CD4-positive, alpha-beta memory T cell (primary cell): ENCODE measurements at regions of chr17 and their contacts with region 1.

Region 1: DNA sequence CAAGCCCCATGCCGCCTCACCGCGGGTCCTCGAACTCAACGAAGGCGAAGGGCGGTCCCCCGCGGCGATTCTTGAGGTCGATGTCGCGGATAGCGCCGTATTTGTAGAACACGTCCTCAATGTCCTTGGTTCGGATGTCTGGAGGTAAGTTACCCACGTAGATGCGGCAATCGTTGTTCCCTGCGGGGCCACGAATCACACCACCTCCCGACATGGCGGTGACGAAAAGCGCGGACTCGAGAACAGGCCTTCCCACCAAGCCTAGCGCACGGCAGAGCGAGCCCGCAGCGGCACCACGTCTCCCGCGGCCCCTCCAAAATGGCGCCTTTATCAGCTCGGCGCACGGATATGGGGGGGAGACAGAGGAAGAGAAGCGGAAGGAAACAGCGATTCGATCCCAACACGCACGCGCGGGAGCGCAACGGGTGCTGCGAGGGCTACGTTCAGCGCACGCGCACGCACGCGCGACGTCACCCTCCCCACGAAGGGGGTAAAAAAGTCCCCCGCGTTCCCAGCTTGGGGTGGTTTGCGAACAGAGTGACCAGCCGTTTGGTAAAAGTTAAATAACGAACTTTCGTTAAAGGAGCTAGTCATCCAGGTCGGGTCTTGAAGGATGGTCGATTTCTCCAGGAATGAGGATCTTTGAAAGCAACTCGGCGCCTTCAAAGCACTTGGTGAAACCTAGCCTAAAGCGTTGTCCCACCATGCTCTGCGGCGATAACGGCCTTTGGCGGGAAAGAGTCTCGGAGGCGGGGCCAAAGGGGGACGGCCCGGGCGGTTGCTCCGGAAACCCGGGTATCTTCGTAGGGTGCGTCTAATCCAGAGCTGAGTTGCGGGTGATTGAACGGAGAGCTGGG is at the start of gene SRSF1:
- DNase-seq: peak; percentile 98 to 99 (median 99)
- H3K4me3 ChIP-seq: peak within 1 kb of the TSS; percentile 96 to 98
- H3K4me3 Mint-ChIP-seq: peak within 1 kb of the TSS; percentile 96 to 100 (median 100)
- H3K27ac ChIP-seq: peak within 1 kb of the TSS; percentile 97
- H3K27ac Mint-ChIP-seq: peak within 1 kb of the TSS; percentile 98 to 100 (median 99)
- H3K4me1 ChIP-seq: peaks cover 46% of the 10 kb centered on the region
- H3K4me1 Mint-ChIP-seq: peaks cover 30 to 61% (median 44%) of the 10 kb centered on the region in 4 donors
- H3K27me3 ChIP-seq: no peaks in the 10 kb centered on the region
- H3K27me3 Mint-ChIP-seq: no peaks in the 10 kb centered on the region
- total RNA-seq, gene SRSF1: 242 to 257 TPM

Region 2: DNA sequence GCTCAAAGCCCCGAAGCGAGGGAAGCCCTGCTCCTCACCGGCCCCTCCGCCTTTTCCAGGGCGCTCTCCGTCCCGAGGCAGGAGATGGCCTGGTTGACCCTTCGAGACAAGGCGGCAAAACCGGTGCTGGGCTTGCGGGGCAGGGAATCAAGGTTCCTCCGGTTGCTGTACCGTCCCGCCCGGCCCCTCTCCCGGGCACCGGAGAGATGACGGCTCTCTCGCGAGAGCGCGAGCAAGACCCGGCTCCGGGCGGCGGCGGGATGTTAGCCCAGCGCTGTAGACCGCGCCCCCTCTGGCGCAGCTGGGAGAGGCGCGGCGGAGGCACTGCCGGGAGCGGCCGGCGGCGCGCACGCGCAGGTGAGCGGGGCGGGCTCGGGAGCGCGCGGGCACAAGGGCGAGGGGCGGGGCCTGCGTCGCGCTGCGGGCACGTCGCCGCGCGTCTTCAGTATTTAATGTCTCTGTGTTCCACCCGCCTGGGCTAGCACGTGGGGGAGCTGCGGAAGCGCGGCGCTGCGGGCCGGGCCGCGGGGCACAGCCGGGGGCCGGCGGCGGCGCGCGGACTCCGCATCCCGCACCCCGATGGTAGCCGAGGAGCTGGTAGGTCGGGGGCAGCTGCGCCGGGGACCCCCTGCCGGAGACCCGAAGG is 922.2 kb before region 1 on chr17 and contains the start of gene AKAP1:
- CTCF ChIA-PET with region 1: no interaction called
- POLR2A ChIA-PET with region 1: interaction called, 5 read pairs
- intact Hi-C with region 1: loop called (anchors 10 kb)
- DNase-seq: peak; percentile 93 to 98 (median 98)
- H3K4me3 ChIP-seq: peak within 1 kb of the TSS; percentile 72 to 99
- H3K4me3 Mint-ChIP-seq: peak within 1 kb of the TSS; percentile 91 to 95 (median 92)
- H3K27ac ChIP-seq: peak within 1 kb of the TSS; percentile 83
- H3K27ac Mint-ChIP-seq: peak within 1 kb of the TSS; percentile 93 to 98 (median 95)
- H3K4me1 ChIP-seq: peaks cover 18% of the 10 kb centered on the region
- H3K4me1 Mint-ChIP-seq: peaks cover 22 to 35% (median 27%) of the 10 kb centered on the region in 4 donors
- H3K27me3 ChIP-seq: no peaks in the 10 kb centered on the region
- H3K27me3 Mint-ChIP-seq: no peaks in the 10 kb centered on the region
- total RNA-seq, gene AKAP1: 33.0 to 35.7 TPM

Region 3: DNA sequence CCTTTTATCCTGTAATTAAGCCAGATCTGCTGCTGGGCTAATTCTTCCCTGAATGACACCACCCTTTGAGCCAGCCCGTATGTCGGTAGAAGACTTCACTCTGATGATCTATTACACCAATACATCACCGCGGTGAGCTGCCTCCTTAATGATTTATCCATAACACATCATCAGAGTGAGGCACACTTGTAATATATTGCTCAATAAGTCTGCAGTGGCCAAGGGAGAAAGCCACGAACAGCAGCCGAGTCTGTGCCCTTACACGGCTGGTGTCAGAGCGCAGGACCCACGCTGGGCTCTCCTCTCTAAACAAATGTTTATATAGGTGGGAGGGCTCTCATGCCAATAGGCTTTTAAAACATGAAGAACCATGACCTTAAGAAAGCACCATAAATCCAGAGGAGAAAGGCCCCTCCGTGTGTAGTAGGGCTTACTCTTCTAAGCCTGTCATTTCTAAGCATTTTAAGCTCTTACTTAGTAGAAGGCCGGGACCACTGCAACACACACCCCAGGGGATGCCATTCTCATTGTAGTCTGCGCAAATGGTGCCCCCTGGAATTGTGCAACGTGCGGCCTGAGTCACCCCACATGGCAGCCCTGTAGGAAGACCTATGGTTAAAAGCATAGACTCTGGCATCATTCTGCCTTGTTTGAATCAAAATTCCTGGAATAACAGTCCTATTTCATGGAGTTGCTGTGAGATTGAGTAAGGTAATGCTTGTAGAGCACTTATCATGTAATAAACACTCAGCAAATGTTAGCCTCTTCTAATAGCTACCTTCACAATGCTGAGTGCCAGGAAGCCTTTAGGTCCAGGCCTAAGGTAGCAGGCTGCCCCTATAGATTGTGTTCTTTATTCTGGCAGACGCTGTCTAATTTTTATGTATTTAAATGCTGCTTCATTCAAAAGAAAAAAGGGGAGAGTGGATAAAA is 183.4 kb before region 1 on chr17:
- CTCF ChIA-PET with region 1: no interaction called
- POLR2A ChIA-PET with region 1: no interaction called
- intact Hi-C with region 1: no loop called
- DNase-seq: no peak
- H3K4me3 ChIP-seq: no peak overlapping the region
- H3K4me3 Mint-ChIP-seq: no peak overlapping the region
- H3K27ac ChIP-seq: no peak overlapping the region
- H3K27ac Mint-ChIP-seq: no peak overlapping the region
- H3K4me1 ChIP-seq: no peaks in the 10 kb centered on the region
- H3K4me1 Mint-ChIP-seq: no peaks in the 10 kb centered on the region
- H3K27me3 ChIP-seq: no peaks in the 10 kb centered on the region
- H3K27me3 Mint-ChIP-seq: peaks cover 3 to 5% of the 10 kb centered on the region in 2 donors

Region 4: DNA sequence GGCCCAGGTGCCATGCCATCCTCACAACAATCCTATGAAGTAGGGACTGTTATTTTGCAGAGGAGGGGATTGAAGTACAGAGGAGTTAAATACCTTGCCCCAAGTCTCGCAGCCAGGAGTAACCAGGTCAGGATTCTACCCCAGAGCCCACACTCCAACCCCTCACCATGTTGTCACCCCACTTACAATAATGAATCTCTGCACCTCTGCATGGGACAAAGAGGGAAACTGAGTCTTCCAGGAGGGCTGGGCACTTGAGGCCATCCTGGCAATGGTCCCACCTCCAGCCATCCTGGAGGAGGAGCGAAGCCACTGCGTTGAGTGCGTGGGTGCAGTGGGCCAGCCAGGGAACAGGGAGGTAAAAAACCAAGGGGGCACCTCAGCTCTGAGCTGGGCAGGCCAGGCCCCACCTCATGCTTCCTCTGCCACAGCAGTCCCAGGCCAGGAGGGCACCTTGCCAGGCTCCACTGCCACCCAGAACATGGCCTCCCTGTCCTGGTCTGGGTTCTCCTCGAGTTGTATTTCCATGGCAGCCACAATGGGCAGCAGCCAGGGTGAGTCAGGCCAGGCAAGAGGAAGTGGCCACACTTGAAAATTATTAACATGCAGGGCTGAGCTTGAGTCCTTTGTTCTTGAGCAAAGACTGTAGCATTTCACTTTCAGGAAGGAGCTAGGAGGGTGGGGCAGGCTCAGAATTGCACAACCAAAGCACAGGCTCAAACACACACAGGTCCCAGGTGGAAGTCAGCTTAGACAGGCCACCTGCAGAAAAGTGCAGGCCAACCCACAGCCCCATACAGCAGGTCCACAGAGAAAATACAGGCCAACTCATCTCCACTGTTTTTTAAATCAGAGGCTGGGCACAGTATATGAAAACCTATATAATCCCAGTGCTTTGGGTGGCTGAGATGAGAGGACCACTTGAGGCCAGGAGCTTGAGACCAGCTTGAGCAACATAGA is 104.1 kb before region 1 on chr17:
- CTCF ChIA-PET with region 1: no interaction called
- POLR2A ChIA-PET with region 1: no interaction called
- intact Hi-C with region 1: no loop called
- DNase-seq: no peak
- H3K4me3 ChIP-seq: no peak overlapping the region
- H3K4me3 Mint-ChIP-seq: peak overlapping the region in 1 of 8 donors; percentile 28
- H3K27ac ChIP-seq: no peak overlapping the region
- H3K27ac Mint-ChIP-seq: peak overlapping the region in 2 of 7 donors; percentile 57 to 66
- H3K4me1 ChIP-seq: peaks cover 14% of the 10 kb centered on the region
- H3K4me1 Mint-ChIP-seq: peaks cover 7 to 27% (median 16%) of the 10 kb centered on the region in 4 donors
- H3K27me3 ChIP-seq: no peaks in the 10 kb centered on the region
- H3K27me3 Mint-ChIP-seq: peaks cover 0 to 2% of the 10 kb centered on the region in 2 donors

Region 5: GRCh38 chr17:57987580-57988421 is 19.4 kb before region 1 on chr17 and contains the start of gene VEZF1:
- CTCF ChIA-PET with region 1: interaction called, 70 read pairs
- POLR2A ChIA-PET with region 1: interaction called, 85 read pairs
- intact Hi-C with region 1: loop called (anchors 1 kb)
- DNase-seq: peak; percentile 75 to 84 (median 80)
- H3K4me3 ChIP-seq: peak within 1 kb of the TSS; percentile 62 to 89
- H3K4me3 Mint-ChIP-seq: peak within 1 kb of the TSS; percentile 94 to 97 (median 96)
- H3K27ac ChIP-seq: peak within 1 kb of the TSS; percentile 76
- H3K27ac Mint-ChIP-seq: peak within 1 kb of the TSS; percentile 94 to 98 (median 97)
- H3K4me1 ChIP-seq: peaks cover 55% of the 10 kb centered on the region
- H3K4me1 Mint-ChIP-seq: peaks cover 46 to 69% (median 61%) of the 10 kb centered on the region in 4 donors
- H3K27me3 ChIP-seq: no peaks in the 10 kb centered on the region
- H3K27me3 Mint-ChIP-seq: no peaks in the 10 kb centered on the region
- total RNA-seq, gene VEZF1: 76.0 to 76.6 TPM

Region 6: GRCh38 chr17:58156839-58157803 is 150.0 kb after region 1 on chr17:
- CTCF ChIA-PET with region 1: no interaction called
- POLR2A ChIA-PET with region 1: interaction called, 6 read pairs
- intact Hi-C with region 1: loop called (anchors 10 kb)
- DNase-seq: peak; percentile 54 to 67 (median 58)
- H3K4me3 ChIP-seq: peak overlapping the region; percentile 55 to 63
- H3K4me3 Mint-ChIP-seq: peak overlapping the region; percentile 87 to 98 (median 92)
- H3K27ac ChIP-seq: peak overlapping the region; percentile 68
- H3K27ac Mint-ChIP-seq: peak overlapping the region; percentile 90 to 99 (median 97)
- H3K4me1 ChIP-seq: peaks cover 63% of the 10 kb centered on the region
- H3K4me1 Mint-ChIP-seq: peaks cover 49 to 82% (median 68%) of the 10 kb centered on the region in 4 donors
- H3K27me3 ChIP-seq: no peaks in the 10 kb centered on the region
- H3K27me3 Mint-ChIP-seq: no peaks in the 10 kb centered on the region

Region 7: GRCh38 chr17:58337600-58338453 is 330.7 kb after region 1 on chr17:
- CTCF ChIA-PET with region 1: no interaction called
- POLR2A ChIA-PET with region 1: interaction called, 5 read pairs
- intact Hi-C with region 1: loop called (anchors 10 kb)
- DNase-seq: peak; percentile 89 to 96 (median 91)
- H3K4me3 ChIP-seq: peak overlapping the region; percentile 99
- H3K4me3 Mint-ChIP-seq: peak overlapping the region; percentile 88 to 99 (median 98)
- H3K27ac ChIP-seq: peak overlapping the region; percentile 97
- H3K27ac Mint-ChIP-seq: peak overlapping the region; percentile 94 to 99 (median 97)
- H3K4me1 ChIP-seq: peaks cover 89% of the 10 kb centered on the region
- H3K4me1 Mint-ChIP-seq: peaks cover 41 to 98% (median 64%) of the 10 kb centered on the region in 4 donors
- H3K27me3 ChIP-seq: no peaks in the 10 kb centered on the region
- H3K27me3 Mint-ChIP-seq: no peaks in the 10 kb centered on the region